HepG2 (cell line): ENCODE measurements at regions of chr3 and their contacts with region 1.

Region 1: GRCh38 chr3:113745273-113746068 is 578 bp downstream of the NAA50 start:
- DNase-seq: peak; percentile 79
- ATAC-seq: peak; percentile 73
- H3K4me3 ChIP-seq: peak overlapping the region; percentile 92 to 100 (median 97)
- H3K27ac ChIP-seq: peak overlapping the region; percentile 100
- H3K4me1 ChIP-seq: peaks cover 60% of the 10 kb centered on the region
- H3K27me3 ChIP-seq: no peaks in the 10 kb centered on the region; a peak in 1 of 5 replicates
- CTCF ChIP-seq: peak; percentile 90
- EP300 ChIP-seq: 0 out of 4 replicates have a peak, but pooled peaks of 1 of the 2 experiments have one; percentile 5
- POLR2A ChIP-seq: 0 out of 4 replicates have a peak, but pooled peaks of 1 of the 2 experiments have one; percentile 10
- RAD21 ChIP-seq: 0 out of 2 replicates have a peak, but pooled peaks have one; percentile 21

Region 2: GRCh38 chr3:113552851-113553250 is 192.6 kb before region 1 on chr3:
- CTCF ChIA-PET with region 1: no interaction called
- POLR2A ChIA-PET with region 1: no interaction called
- in situ Hi-C with region 1: no loop called
- intact Hi-C with region 1: loop called (anchors 10 kb)
- DNase-seq: no peak
- ATAC-seq: peak; percentile 53
- H3K4me3 ChIP-seq: no peak overlapping the region
- H3K27ac ChIP-seq: no peak overlapping the region
- H3K4me1 ChIP-seq: peaks cover 63% of the 10 kb centered on the region
- H3K27me3 ChIP-seq: no peaks in the 10 kb centered on the region; a peak in 1 of 5 replicates
- CTCF ChIP-seq: peak; percentile 59
- EP300 ChIP-seq: no peak
- POLR2A ChIP-seq: no peak
- RAD21 ChIP-seq: 0 out of 2 replicates have a peak, but pooled peaks have one; percentile 20

Region 3: GRCh38 chr3:113696658-113697499 is 48.6 kb before region 1 on chr3:
- CTCF ChIA-PET with region 1: no interaction called
- POLR2A ChIA-PET with region 1: interaction called, 11 read pairs
- in situ Hi-C with region 1: no loop called
- intact Hi-C with region 1: loop called (anchors 5 kb)
- DNase-seq: peak; percentile 98
- ATAC-seq: peak; percentile 90
- H3K4me3 ChIP-seq: peak overlapping the region; percentile 77 to 92 (median 85)
- H3K27ac ChIP-seq: peak overlapping the region; percentile 73
- H3K4me1 ChIP-seq: peaks cover 52% of the 10 kb centered on the region
- H3K27me3 ChIP-seq: no peaks in the 10 kb centered on the region; a peak in 1 of 5 replicates
- CTCF ChIP-seq: peak; percentile 25
- EP300 ChIP-seq: no peak
- POLR2A ChIP-seq: no peak
- RAD21 ChIP-seq: no peak

Region 4: DNA sequence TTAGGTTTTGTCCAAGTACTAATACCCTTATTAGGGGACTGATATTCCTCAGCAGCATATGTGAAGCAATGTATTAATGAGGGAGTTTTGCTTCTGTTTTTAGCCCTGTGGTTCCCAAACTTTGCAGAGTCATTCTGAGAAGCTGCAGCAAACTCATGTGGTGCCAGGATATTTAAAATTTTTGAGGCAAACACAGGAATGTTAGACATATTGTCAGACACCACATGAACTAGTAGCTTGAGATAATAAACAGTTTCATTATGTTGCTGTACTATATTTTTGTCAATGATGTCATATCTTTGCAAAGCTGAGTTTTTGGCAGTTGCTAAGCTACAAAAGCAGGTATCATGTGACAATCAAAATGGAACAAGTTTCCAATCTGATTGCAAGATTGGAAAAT is 38.0 kb after region 1 on chr3:
- CTCF ChIA-PET with region 1: no interaction called
- POLR2A ChIA-PET with region 1: no interaction called
- in situ Hi-C with region 1: no loop called
- intact Hi-C with region 1: no loop called
- DNase-seq: no peak
- ATAC-seq: no peak
- H3K4me3 ChIP-seq: no peak overlapping the region
- H3K27ac ChIP-seq: no peak overlapping the region
- H3K4me1 ChIP-seq: peaks cover 4% of the 10 kb centered on the region; the same call in 1 of the 2 replicates
- H3K27me3 ChIP-seq: no peaks in the 10 kb centered on the region
- CTCF ChIP-seq: no peak
- EP300 ChIP-seq: no peak
- POLR2A ChIP-seq: no peak
- RAD21 ChIP-seq: no peak

Region 5: GRCh38 chr3:113838631-113839209 is 93.2 kb after region 1 on chr3 and contains the start of gene GRAMD1C:
- CTCF ChIA-PET with region 1: no interaction called
- POLR2A ChIA-PET with region 1: no interaction called
- in situ Hi-C with region 1: loop called (anchors 10 kb)
- intact Hi-C with region 1: no loop called
- DNase-seq: peak; percentile 72
- ATAC-seq: peak; percentile 98
- H3K4me3 ChIP-seq: peak within 1 kb of the TSS; percentile 44 to 77 (median 57)
- H3K27ac ChIP-seq: no peak within 1 kb of the TSS
- H3K4me1 ChIP-seq: peaks cover 26% of the 10 kb centered on the region
- H3K27me3 ChIP-seq: peaks cover 0 to 6% of the 10 kb centered on the region in 2 experiments; a peak in 4 of 5 replicates
- CTCF ChIP-seq: peak; percentile 90
- EP300 ChIP-seq: no peak
- POLR2A ChIP-seq: no peak
- RAD21 ChIP-seq: peak; percentile 83
- total RNA-seq, gene GRAMD1C: not detected in 2 replicates

Region 6: DNA sequence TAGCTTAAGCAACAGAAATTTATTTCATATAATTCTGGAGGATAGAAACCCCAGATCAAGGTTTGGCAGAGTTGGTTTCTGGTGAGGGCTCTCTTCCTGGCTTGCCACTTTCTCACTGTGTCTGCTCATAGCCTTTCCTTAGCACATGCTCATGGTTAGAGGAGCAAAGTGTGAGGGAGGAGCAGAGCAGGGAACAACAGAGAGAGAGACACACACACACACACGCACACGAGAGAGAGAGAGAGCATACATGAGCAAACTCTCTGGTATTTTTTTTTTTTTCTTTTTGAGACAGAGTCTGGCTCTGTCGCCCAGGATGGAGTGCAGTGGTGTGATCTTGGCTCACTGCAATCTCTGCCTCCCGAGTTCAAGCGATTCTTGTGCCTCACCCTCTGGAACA is 165.5 kb after region 1 on chr3:
- CTCF ChIA-PET with region 1: no interaction called
- POLR2A ChIA-PET with region 1: no interaction called
- in situ Hi-C with region 1: no loop called
- intact Hi-C with region 1: no loop called
- DNase-seq: no peak
- ATAC-seq: no peak
- H3K4me3 ChIP-seq: no peak overlapping the region
- H3K27ac ChIP-seq: no peak overlapping the region
- H3K4me1 ChIP-seq: no peaks in the 10 kb centered on the region
- H3K27me3 ChIP-seq: 0 out of 5 replicates have a peak, but pooled peaks cover 0 to 8% of the 10 kb centered on the region in 2 experiments
- CTCF ChIP-seq: no peak
- EP300 ChIP-seq: no peak
- POLR2A ChIP-seq: no peak
- RAD21 ChIP-seq: no peak